ENCODE measurements at regions of chr17 and their contacts with region 1.

Region 1: GRCh38 chr17:4420692-4421131 is 13.0 kb upstream of the SPNS3 start:
- DNase-seq: no peak

Region 2: DNA sequence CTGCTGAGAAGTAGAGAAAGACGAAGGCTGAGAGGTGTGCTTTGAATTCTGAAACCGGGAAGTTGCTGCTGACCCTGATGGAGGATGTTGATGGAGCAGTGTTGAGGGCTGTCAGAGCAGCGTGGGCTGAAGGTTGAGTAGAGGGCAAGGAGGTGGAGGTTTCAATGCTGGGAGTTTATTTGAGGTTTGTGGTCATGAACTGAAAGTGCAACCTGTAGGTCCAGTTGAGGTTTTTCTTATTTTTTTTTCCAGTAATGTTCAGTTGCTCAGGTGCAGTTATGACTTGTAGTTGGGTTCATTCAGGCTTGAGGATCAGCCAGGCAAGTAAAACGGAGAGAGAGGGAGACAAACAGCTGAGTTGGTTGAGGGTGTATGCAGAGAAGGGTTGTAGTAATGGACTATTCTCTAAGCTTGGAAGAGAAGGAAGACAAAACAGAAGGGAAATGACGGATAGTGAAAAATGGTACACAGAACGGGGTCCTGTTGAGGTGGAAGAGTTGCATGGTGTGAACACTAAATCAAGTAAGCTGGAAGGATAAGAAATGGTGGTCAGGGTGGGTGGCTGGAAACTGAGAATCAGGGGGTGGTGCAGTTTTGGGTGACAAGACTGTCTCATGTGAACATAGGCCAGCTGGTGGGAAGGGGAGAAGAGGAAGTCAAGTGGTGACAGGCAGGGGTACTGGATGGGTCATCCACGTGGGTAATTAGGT is 45.5 kb before region 1 on chr17:
- intact Hi-C with region 1: no loop called
- DNase-seq: no peak

Region 3: DNA sequence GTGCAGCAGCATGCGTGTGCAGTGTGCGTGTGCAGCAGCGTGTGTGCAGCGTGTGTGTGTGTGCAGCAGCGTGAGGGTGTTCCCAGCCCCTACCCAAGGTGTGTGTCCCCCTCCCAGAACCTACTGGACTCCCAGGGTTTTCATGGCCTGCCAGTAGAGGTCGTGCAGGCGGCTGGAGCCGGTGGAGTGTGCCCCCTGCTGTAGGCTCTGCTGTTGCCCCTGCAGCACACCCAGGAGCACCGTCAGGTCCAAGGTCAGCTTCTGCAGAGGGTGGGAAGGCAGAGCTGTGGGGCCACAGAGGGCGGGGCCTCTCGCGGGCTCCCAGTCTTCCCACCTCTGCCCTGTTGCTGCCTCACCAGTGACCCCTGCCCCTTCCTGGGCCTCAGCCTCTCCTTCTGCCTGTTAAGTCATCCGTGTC is 119.5 kb after region 1 on chr17:
- intact Hi-C with region 1: loop called (anchors 5 kb)
- DNase-seq: no peak

Region 4: GRCh38 chr17:4554997-4555799 is 134.5 kb after region 1 on chr17 and contains the start of gene MYBBP1A:
- intact Hi-C with region 1: loop called (anchors 5 kb)
- DNase-seq: peak; percentile 98
- total RNA-seq, gene MYBBP1A: 26.1 TPM

Region 5: DNA sequence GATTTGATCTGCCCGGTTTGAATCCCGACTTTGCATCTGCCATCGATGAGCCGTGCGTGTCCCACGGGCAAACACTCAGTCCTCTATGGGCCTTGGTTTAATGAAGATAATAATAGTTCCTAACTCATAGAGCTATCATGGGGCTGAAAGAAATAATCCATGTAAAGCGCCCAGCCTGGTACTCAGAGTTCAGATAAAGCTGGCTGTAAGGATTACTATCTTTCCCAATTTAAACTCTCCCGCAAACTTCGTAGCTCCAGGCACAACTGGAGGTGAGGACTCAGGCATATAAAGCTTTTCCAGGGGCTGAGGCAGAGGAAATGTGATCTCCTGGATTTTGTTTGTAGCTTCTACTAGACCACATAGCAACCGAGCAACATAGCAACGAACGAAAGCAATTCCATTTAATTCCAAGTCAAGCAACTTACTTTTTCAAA is 204.5 kb after region 1 on chr17:
- intact Hi-C with region 1: loop called (anchors 5 kb)
- DNase-seq: no peak

Measured in cardiac septum (tissue), 1 donor.